Calu3 (cell line): ENCODE measurements at regions of chr5 and their contacts with region 1.

Region 1: GRCh38 chr5:134714120-134714519 is 24.2 kb upstream of the CAMLG start:
- DNase-seq: no peak
- H3K4me3 Mint-ChIP-seq: no peak overlapping the region
- H3K27ac Mint-ChIP-seq: no peak overlapping the region
- H3K4me1 Mint-ChIP-seq: no peaks in the 10 kb centered on the region
- H3K27me3 Mint-ChIP-seq: no peaks in the 10 kb centered on the region
- CTCF ChIP-seq: no peak

Region 2: GRCh38 chr5:134659922-134660321 is 54.2 kb before region 1 on chr5:
- CTCF ChIA-PET with region 1: interaction called, 12 read pairs
- intact Hi-C with region 1: no loop called
- DNase-seq: no peak
- H3K4me3 Mint-ChIP-seq: no peak overlapping the region
- H3K27ac Mint-ChIP-seq: no peak overlapping the region
- H3K4me1 Mint-ChIP-seq: peaks cover 22% of the 10 kb centered on the region
- H3K27me3 Mint-ChIP-seq: no peaks in the 10 kb centered on the region
- CTCF ChIP-seq: no peak

Region 3: DNA sequence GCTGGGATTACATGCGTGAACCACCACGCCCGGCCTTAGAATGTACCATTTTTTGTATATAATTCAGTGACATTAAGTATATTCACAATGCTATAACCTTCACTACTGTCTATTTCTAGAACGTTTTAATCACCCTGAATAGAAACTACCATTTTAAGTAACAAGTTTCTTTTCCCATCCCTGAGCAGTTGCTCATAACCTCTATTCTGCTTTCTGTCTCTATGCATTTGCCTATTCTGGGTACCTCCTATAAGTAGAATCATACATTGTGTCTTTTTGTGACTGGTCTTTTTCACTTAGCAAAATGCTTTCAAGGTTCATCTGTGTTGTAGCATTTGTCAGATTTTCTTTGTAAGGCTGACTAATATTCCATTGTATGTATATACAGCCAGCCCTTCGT is 84.3 kb after region 1 on chr5:
- CTCF ChIA-PET with region 1: no interaction called
- intact Hi-C with region 1: no loop called
- DNase-seq: no peak
- H3K4me3 Mint-ChIP-seq: no peak overlapping the region
- H3K27ac Mint-ChIP-seq: no peak overlapping the region
- H3K4me1 Mint-ChIP-seq: no peaks in the 10 kb centered on the region
- H3K27me3 Mint-ChIP-seq: no peaks in the 10 kb centered on the region
- CTCF ChIP-seq: no peak